ENCODE measurements at regions of chr16 and their contacts with region 1.

Region 1: GRCh38 chr16:87636072-87636684 is 33.9 kb downstream of the JPH3 start:
- ATAC-seq: peak; percentile 89 to 97 (median 92)
- H3K4me3 ChIP-seq: peak overlapping the region in 1 of 5 donors; percentile 2
- H3K27ac ChIP-seq: no peak overlapping the region
- H3K4me1 ChIP-seq: peaks cover 2 to 10% of the 10 kb centered on the region in 2 donors

Region 2: GRCh38 chr16:86609115-86609514 is 1027.1 kb before region 1 on chr16:
- in situ Hi-C with region 1: no loop called
- ATAC-seq: peak in 1 of 8 experiments; percentile 34
- H3K4me3 ChIP-seq: no peak overlapping the region
- H3K27ac ChIP-seq: no peak overlapping the region
- H3K4me1 ChIP-seq: peaks cover 0 to 7% of the 10 kb centered on the region in 2 donors

Region 3: DNA sequence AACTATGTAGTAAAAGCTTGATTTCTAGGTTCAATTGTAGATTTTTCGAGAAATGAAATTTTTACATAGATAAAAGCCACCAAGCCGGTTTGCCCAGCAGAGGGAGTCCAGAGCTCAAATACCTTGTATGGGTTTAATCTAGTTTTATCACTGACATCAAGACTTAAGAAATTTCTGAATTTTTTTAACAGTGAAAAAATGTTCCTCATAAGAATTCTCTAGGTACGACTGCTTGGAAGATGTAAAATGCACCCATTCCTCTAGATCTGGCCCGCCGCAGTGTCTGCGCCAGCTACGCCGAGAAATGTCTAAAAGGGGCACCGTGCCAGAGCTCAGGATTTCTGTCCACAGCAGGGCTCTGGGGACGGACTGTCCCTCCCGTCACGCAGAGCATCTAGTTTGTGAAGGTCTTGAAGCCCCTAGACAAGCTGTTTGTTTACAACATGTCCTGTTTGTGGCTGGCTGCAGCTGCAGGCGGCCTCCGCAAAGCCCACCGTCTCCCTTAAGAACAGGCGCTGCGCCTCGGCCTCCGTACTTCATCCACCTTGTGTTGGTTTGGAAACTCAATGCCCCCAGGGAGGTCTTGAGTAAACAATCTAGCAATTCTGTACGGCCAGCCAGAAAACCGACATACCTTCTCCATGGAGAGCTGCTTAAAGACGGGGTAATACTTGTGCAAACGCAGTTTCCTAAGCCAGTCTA is 219.2 kb before region 1 on chr16:
- in situ Hi-C with region 1: loop called in 1 of 9 experiments (anchors 25 kb)
- ATAC-seq: peak in 2 of 8 experiments; percentile 19 to 71
- H3K4me3 ChIP-seq: no peak overlapping the region
- H3K27ac ChIP-seq: no peak overlapping the region
- H3K4me1 ChIP-seq: no peaks in the 10 kb centered on the region

Region 4: GRCh38 chr16:87540945-87541877 is 95.0 kb before region 1 on chr16:
- in situ Hi-C with region 1: no loop called
- ATAC-seq: peak in 6 of 8 experiments; percentile 50 to 83 (median 80)
- H3K4me3 ChIP-seq: peak overlapping the region in 1 of 5 donors; percentile 16
- H3K27ac ChIP-seq: peak overlapping the region; percentile 62 to 64
- H3K4me1 ChIP-seq: peaks cover 34 to 35% of the 10 kb centered on the region in 2 donors

Region 5: DNA sequence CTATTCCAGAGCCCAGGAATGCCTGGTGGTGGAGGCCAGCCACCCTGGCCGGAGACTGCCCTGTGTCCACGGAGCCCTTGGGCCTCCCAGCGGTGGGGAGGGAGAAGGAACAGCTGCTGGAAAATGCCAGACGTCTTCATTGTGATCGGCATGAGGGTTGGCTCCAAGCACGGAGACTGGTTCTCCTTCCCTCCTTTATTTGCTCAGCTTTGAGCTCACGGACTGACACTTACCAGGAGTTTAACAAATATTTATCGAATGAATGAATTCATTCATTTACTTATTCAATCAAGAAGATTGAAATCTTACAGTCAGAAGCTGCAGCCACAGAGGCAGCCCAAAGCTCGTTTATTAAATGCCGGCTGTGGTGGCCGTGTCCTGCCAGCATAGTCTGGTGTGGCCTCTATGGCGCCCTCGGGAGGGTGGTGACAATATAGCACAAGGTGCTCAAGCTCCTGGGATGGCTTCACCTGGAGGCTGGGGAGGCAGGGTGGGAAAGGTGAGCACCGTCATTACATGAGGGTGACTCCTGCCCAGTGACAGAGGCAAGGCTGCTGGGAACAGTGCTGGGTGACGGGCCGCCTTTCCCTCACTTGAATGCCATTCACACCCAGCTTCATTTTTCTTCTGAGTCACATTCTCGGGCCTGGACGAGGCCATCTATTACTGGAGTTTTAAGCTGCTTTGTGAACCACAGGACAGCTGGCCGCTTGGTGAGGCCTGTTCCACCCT is 64.9 kb before region 1 on chr16:
- in situ Hi-C with region 1: no loop called
- ATAC-seq: peak; percentile 71 to 96 (median 82)
- H3K4me3 ChIP-seq: no peak overlapping the region
- H3K27ac ChIP-seq: peak overlapping the region in 1 of 2 donors; percentile 44
- H3K4me1 ChIP-seq: peaks cover 0 to 22% of the 10 kb centered on the region in 2 donors

Measured in motor neuron (in vitro differentiated cells).